ENCODE measurements at regions of chr7 and their contacts with region 1.

Region 1: GRCh38 chr7:140441519-140441918 is 37.7 kb downstream of the RAB19 start:
- DNase-seq: no peak
- H3K4me3 Mint-ChIP-seq: no peak overlapping the region
- H3K27ac Mint-ChIP-seq: no peak overlapping the region
- H3K4me1 Mint-ChIP-seq: peaks cover 5% of the 10 kb centered on the region
- H3K27me3 Mint-ChIP-seq: no peaks in the 10 kb centered on the region

Region 2: GRCh38 chr7:140451716-140452115 is 10.2 kb after region 1 on chr7:
- CTCF ChIA-PET with region 1: interaction called, 18 read pairs
- POLR2A ChIA-PET with region 1: no interaction called
- DNase-seq: no peak
- H3K4me3 Mint-ChIP-seq: no peak overlapping the region
- H3K27ac Mint-ChIP-seq: no peak overlapping the region
- H3K4me1 Mint-ChIP-seq: peaks cover 69% of the 10 kb centered on the region
- H3K27me3 Mint-ChIP-seq: no peaks in the 10 kb centered on the region

Region 3: DNA sequence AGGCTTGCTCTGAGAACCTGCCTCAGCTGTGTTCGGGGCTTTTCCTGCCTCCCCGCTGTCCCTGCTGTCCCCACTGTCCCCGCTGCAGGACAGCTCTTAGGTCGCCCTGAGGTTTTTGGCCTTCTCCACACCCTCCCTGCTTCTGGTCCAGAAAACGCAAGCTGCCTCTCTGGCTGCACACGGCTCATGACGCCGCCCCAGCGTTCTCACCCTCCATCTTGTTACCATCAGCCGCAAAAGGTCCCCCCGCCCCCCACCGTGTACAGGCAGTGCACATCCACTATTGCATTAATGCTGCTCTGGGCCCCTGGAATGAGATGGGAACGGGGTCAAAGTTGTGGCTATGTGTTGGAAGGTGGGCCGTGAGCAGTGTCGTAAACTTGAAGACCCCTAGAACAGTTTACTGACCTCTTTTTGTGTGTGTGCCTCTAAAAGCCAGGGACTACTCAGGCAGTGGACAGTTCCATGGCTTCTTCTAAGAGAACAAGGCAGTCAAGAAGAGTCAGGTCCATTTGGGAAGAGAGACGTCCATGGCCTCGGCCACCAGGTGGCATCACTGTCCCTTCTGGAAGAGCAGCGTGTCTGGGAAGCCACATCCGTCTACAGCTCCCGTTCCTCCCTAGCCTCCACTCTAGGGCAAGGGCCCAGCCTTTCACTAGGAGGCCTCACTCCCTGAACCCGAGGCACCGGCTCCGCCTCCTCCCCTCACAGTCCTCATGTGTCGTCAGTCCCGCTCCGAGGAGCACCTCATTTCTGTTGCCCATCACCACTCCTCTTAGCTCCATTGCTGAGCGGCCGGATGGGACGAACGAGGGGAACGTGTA is 76.2 kb after region 1 on chr7:
- CTCF ChIA-PET with region 1: no interaction called
- POLR2A ChIA-PET with region 1: no interaction called
- DNase-seq: peak; percentile 70
- H3K4me3 Mint-ChIP-seq: no peak overlapping the region
- H3K27ac Mint-ChIP-seq: no peak overlapping the region
- H3K4me1 Mint-ChIP-seq: peaks cover 4% of the 10 kb centered on the region
- H3K27me3 Mint-ChIP-seq: peaks cover 10% of the 10 kb centered on the region